Colonic mucosa (tissue), 4 donors: ENCODE measurements at regions of chr6 and their contacts with region 1.

Region 1: DNA sequence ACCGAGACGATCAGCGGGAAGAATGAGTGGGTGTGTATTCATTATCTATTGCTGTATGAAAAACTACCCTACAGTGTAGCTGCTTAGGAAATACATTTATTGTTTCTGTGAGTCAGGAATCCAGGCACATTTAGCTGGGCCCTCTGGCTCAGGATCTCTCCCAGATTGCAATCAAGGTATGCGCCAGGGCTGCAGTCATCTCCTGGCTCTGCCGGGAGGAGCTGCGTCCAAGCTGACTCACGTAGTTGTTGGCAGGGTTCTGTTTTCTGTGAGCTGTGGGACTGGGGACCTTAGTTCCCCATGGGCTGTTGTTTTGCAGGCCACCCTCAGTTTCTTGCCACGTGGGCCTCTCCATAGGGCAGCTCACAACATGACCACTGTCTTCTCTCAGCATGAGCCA is 68.2 kb upstream of the FUCA2 start:
- DNase-seq: no peak
- H3K4me3 ChIP-seq: no peak overlapping the region
- H3K27ac ChIP-seq: no peak overlapping the region
- H3K4me1 ChIP-seq: no peaks in the 10 kb centered on the region
- H3K27me3 ChIP-seq: no peaks in the 10 kb centered on the region
- CTCF ChIP-seq: no peak

Region 2: GRCh38 chr6:143457563-143458359 is 121.9 kb before region 1 on chr6:
- intact Hi-C with region 1: no loop called
- DNase-seq: no peak
- H3K4me3 ChIP-seq: no peak overlapping the region
- H3K27ac ChIP-seq: no peak overlapping the region
- H3K4me1 ChIP-seq: no peaks in the 10 kb centered on the region
- H3K27me3 ChIP-seq: no peaks in the 10 kb centered on the region
- CTCF ChIP-seq: no peak

Region 3: DNA sequence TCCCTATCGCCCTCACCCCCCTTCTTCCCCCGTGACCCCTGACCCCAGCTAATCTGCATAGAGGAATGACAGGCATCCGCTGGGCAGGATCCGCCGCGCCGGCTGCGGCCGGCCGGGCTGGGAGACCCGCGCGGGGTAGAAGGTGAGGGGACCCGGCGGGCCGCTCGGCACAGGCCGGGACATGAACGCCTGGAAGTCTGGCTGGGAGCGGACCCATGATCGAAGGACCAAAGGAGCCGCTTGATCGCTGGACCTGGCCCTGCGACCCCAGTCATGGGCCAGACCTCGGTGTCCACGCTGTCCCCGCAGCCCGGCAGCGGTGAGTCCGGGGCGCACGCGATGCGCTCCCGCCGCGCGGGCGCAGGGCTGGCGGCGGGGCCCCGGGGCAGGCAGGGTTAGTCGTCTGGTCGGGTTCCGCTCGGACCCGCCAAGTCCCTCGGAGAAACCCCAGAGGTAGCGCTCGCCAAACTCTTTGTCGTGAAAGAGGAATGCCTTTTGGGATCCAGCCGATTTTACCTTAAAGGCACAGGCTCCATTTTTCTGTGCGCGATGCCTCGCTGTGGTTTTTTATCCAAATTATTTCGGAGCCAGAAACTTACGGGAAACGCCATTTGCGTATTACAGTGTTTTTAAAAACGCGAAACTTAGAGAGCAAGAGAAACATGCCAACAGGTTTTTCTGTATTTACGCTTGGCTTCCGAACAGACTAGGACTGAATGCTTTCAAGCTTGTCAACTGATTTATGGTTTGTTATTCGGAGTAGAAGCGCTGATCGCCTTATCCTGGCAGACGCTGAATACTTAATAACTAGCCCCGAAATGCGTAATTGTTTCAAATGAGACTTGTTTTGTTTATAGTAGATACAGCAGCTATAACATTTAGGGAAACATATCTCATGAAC is 98.4 kb after region 1 on chr6 and contains the start of gene PHACTR2:
- intact Hi-C with region 1: no loop called
- DNase-seq: peak; percentile 73
- H3K4me3 ChIP-seq: peak within 1 kb of the TSS; percentile 70
- H3K27ac ChIP-seq: peak within 1 kb of the TSS; percentile 77
- H3K4me1 ChIP-seq: no peaks in the 10 kb centered on the region
- H3K27me3 ChIP-seq: no peaks in the 10 kb centered on the region
- CTCF ChIP-seq: no peak
- total RNA-seq, gene PHACTR2: 42.5 to 46.9 TPM

Region 4: GRCh38 chr6:143759666-143760065 is 180.0 kb after region 1 on chr6:
- intact Hi-C with region 1: loop called (anchors 10 kb)
- DNase-seq: no peak
- H3K4me3 ChIP-seq: no peak overlapping the region
- H3K27ac ChIP-seq: no peak overlapping the region
- H3K4me1 ChIP-seq: no peaks in the 10 kb centered on the region
- H3K27me3 ChIP-seq: no peaks in the 10 kb centered on the region
- CTCF ChIP-seq: no peak

Region 5: DNA sequence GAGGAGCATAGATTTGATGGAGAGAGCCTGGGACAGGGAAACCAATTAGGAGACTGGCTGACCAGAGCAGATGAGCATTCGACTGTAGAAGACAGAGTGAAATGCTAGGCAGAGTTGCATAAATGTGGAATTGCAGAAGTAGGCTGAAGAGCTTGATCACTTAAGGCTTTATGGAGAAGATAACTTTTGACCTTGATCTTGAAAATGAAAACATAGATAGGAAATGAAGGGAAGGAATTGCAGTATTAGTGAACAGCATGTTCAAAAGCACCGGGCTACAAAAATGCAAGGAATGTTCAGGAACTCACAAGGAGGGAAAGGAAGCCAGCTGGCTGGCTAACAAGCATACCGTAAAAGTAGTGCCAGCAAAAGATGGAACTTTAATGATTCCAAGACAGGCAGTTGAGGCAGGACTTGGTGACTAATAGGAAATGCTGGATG is 242.9 kb after region 1 on chr6:
- intact Hi-C with region 1: no loop called
- DNase-seq: no peak
- H3K4me3 ChIP-seq: no peak overlapping the region
- H3K27ac ChIP-seq: no peak overlapping the region
- H3K4me1 ChIP-seq: no peaks in the 10 kb centered on the region
- H3K27me3 ChIP-seq: no peaks in the 10 kb centered on the region
- CTCF ChIP-seq: no peak

Region 6: GRCh38 chr6:143842902-143843676 is 263.4 kb after region 1 on chr6 and contains the start of gene LTV1:
- intact Hi-C with region 1: loop called (anchors 10 kb)
- DNase-seq: peak; percentile 97
- H3K4me3 ChIP-seq: peak within 1 kb of the TSS; percentile 98
- H3K27ac ChIP-seq: peak within 1 kb of the TSS; percentile 69
- H3K4me1 ChIP-seq: no peaks in the 10 kb centered on the region
- H3K27me3 ChIP-seq: no peaks in the 10 kb centered on the region
- CTCF ChIP-seq: no peak
- total RNA-seq, gene LTV1: 11.0 to 17.4 TPM

Region 7: GRCh38 chr6:144013486-144013909 is 433.8 kb after region 1 on chr6:
- intact Hi-C with region 1: loop called (anchors 2 kb)
- DNase-seq: peak; percentile 84
- H3K4me3 ChIP-seq: no peak overlapping the region
- H3K27ac ChIP-seq: no peak overlapping the region
- H3K4me1 ChIP-seq: peaks cover 3% of the 10 kb centered on the region
- H3K27me3 ChIP-seq: no peaks in the 10 kb centered on the region
- CTCF ChIP-seq: peak; percentile 86